Activated CD4-positive, alpha-beta T cell treated with anti-CD3 and anti-CD28 coated beads for 36 hours (primary cell): ENCODE measurements at regions of chr14 and their contacts with region 1.

Region 1: GRCh38 chr14:88492272-88493089 is 62.3 kb downstream of the PTPN21 start:
- DNase-seq: peak; percentile 74
- ATAC-seq: peak; percentile 69
- H3K4me3 Mint-ChIP-seq: no peak overlapping the region
- H3K27ac Mint-ChIP-seq: no peak overlapping the region
- H3K4me1 Mint-ChIP-seq: no peaks in the 10 kb centered on the region
- H3K27me3 Mint-ChIP-seq: peaks cover 3% of the 10 kb centered on the region

Region 2: GRCh38 chr14:88868558-88869159 is 376.2 kb after region 1 on chr14:
- CTCF ChIA-PET with region 1: no interaction called
- POLR2A ChIA-PET with region 1: no interaction called
- intact Hi-C with region 1: loop called in 1 of 2 experiments (anchors 1 kb)
- DNase-seq: no peak
- ATAC-seq: no peak
- H3K4me3 Mint-ChIP-seq: no peak overlapping the region
- H3K27ac Mint-ChIP-seq: no peak overlapping the region
- H3K4me1 Mint-ChIP-seq: no peaks in the 10 kb centered on the region
- H3K27me3 Mint-ChIP-seq: no peaks in the 10 kb centered on the region

Region 3: GRCh38 chr14:89013084-89013504 is 520.6 kb after region 1 on chr14:
- CTCF ChIA-PET with region 1: interaction called, 4 read pairs
- POLR2A ChIA-PET with region 1: no interaction called
- intact Hi-C with region 1: loop called in 1 of 2 experiments (anchors 2 kb)
- DNase-seq: peak; percentile 59
- ATAC-seq: peak; percentile 74
- H3K4me3 Mint-ChIP-seq: no peak overlapping the region
- H3K27ac Mint-ChIP-seq: no peak overlapping the region
- H3K4me1 Mint-ChIP-seq: no peaks in the 10 kb centered on the region
- H3K27me3 Mint-ChIP-seq: peaks cover 18% of the 10 kb centered on the region